ENCODE measurements at regions of chr3 and their contacts with region 1.

Region 1: DNA sequence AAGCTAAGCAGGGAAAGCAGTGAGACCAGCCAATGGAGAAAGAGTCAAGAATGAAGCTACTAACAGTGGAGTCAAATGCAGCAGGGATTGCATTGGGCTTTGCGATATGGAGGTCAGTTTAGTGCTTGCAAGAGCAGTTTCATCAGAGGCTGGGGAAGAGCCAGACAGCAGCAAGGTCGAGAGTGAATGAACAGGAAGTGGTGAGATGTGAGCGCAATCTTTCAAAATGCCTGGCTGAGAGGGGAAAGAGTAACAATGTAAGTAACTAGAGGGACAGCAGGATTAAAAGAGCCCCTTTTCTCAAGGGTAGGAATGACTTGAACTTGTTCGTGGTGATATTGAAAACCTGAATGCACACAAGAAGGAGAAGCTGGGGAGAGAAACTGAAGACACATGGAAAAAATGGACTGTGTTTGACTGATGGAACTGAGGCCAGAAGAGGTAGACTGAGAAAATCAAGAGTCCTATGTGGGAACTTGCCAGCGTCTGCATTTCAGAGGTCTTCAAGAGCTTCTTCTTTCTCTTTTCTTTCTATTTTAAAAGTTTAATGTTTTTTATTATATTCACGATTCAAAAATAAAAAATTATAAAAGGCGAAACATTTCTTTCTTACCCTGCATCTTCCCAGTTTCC is 30.6 kb upstream of the GPR160 start:
- DNase-seq: peak; percentile 60
- H3K4me3 Mint-ChIP-seq: peak overlapping the region; percentile 0
- H3K27ac Mint-ChIP-seq: peak overlapping the region; percentile 52
- H3K4me1 Mint-ChIP-seq: peaks cover 44% of the 10 kb centered on the region
- H3K27me3 Mint-ChIP-seq: no peaks in the 10 kb centered on the region

Region 2: GRCh38 chr3:170021083-170021482 is 13.9 kb after region 1 on chr3:
- CTCF ChIA-PET with region 1: interaction called, 16 read pairs
- DNase-seq: no peak
- H3K4me3 Mint-ChIP-seq: no peak overlapping the region
- H3K27ac Mint-ChIP-seq: no peak overlapping the region
- H3K4me1 Mint-ChIP-seq: peaks cover 24% of the 10 kb centered on the region
- H3K27me3 Mint-ChIP-seq: peaks cover 8% of the 10 kb centered on the region

Measured in activated naive CD4-positive, alpha-beta T cell treated with anti-CD3 and anti-CD28 coated beads, Interleukin-2, amount 10 ng/mL, durations not matched to agents 7 days and 5 days (primary cell).